Endothelial cell of umbilical vein (primary cell): ENCODE measurements at regions of chr14 and their contacts with region 1.

Region 1: DNA sequence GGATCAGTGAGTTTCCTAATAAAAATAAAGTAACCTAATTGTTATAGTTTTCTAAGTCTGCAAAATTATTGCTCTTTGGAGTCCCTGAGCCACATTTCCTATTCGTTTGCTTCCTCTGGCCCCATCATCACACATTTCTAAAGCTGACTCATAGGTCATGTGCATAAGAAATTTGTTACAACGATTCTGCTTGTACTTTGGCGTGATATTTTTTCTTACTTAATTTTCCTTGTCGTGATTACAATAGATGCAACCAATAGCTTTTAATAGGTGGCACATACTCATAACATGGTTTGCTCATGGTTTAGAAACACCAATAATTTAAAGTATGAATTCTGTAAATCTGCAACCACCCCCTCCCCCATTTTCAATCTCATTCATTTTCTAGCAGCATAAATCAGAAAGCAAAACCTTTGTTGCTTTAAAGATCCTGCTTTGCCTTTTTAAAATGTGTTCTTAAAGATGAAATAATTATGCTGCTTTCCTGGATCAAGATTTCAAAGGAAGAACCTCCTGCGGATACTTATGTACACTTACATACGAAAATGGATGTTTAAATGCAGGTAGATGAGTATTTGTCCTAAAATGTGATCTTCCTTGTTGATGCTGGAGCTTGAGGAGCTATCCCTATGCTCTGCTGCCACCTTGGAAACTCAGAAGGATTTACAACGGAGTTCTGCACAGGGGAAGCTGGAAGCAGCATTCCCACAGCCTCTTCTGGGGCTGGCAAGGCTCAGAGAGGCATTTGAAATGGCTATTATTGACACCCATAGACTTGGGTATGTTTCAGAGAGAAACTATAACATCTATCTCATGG is 1.7 kb upstream of the FLRT2 start:
- DNase-seq: peak; percentile 94
- H3K4me3 ChIP-seq: peak overlapping the region; percentile 38 to 94 (median 93)
- H3K27ac ChIP-seq: peak overlapping the region; percentile 93
- H3K4me1 ChIP-seq: peaks cover 19% of the 10 kb centered on the region
- H3K27me3 ChIP-seq: no peaks in the 10 kb centered on the region
- CTCF ChIP-seq: peak; percentile 52 to 65
- POLR2A ChIP-seq: peak; percentile 39

Region 2: DNA sequence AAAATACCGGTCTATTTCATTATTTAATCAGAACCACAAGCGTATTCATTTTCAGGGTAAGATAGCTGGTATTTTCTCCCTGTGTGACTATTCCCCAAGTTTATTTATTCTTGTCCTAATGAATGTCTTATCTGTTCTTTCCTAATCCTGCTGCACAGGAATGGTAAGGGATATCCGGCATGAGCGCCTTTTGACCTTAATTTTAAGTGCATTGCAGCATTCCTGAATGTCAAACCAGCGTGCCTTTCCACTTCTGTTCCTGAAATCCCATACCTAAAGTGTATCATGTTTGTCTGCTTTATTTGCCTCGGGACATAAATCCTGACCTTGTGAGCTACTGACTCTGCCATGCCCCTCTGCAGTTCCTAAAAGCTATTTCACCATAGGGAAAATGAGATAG is 1711.5 kb before region 1 on chr14:
- CTCF ChIA-PET with region 1: no interaction called
- POLR2A ChIA-PET with region 1: no interaction called
- dilution Hi-C with region 1: no loop called
- intact Hi-C with region 1: loop called (anchors 2 kb)
- DNase-seq: peak; percentile 87
- H3K4me3 ChIP-seq: peak overlapping the region in 1 of 3 experiments; percentile 35
- H3K27ac ChIP-seq: peak overlapping the region; percentile 37
- H3K4me1 ChIP-seq: peaks cover 21% of the 10 kb centered on the region
- H3K27me3 ChIP-seq: no peaks in the 10 kb centered on the region
- CTCF ChIP-seq: no peak
- POLR2A ChIP-seq: peak; percentile 57

Region 3: DNA sequence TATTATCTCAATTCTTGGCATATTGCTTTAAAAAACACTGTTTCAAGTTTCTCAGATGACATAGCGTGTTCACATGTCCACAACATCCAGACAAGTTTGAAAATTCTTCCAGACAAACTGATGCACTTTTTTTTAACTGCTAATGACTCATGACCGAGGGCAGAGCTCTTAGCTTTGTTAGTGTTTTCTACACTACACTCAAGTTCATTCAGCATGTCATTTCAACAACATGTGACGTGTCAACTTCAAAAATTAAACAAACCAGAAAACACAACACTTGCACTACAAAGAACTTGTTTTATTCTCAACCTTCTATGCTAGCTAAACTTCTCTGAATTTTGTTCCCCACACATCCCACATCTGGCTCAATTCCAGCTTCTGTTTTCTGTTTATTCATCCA is 1184.6 kb before region 1 on chr14:
- CTCF ChIA-PET with region 1: no interaction called
- POLR2A ChIA-PET with region 1: no interaction called
- dilution Hi-C with region 1: no loop called
- intact Hi-C with region 1: loop called (anchors 5 kb)
- DNase-seq: peak; percentile 92
- H3K4me3 ChIP-seq: no peak overlapping the region
- H3K27ac ChIP-seq: peak overlapping the region; percentile 58
- H3K4me1 ChIP-seq: peaks cover 21% of the 10 kb centered on the region
- H3K27me3 ChIP-seq: no peaks in the 10 kb centered on the region
- CTCF ChIP-seq: no peak
- POLR2A ChIP-seq: no peak

Region 4: GRCh38 chr14:84749191-84749955 is 778.9 kb before region 1 on chr14:
- CTCF ChIA-PET with region 1: no interaction called
- POLR2A ChIA-PET with region 1: no interaction called
- dilution Hi-C with region 1: no loop called
- intact Hi-C with region 1: loop called (anchors 2 kb)
- DNase-seq: peak; percentile 52
- H3K4me3 ChIP-seq: no peak overlapping the region
- H3K27ac ChIP-seq: peak overlapping the region; percentile 15
- H3K4me1 ChIP-seq: peaks cover 13% of the 10 kb centered on the region
- H3K27me3 ChIP-seq: no peaks in the 10 kb centered on the region
- CTCF ChIP-seq: no peak
- POLR2A ChIP-seq: no peak

Region 5: DNA sequence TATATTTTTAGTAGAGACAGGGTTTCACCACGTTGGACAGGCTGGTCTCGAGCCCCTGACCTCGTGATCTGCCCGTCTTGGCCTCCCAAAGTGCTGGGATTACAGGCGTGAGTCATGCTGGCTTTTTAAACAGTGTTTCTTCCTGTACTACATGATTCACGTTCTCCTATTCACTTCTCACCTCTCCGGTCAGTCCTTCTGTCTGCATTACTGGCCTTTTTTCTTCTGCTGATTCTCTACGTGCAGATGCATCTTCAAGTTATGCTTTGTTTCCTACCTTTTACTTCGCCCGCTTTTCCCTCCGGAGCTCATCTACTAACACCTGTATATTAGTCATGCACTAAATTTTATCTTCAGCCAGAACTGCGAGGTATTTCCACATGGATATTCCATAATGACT is 294.5 kb before region 1 on chr14:
- CTCF ChIA-PET with region 1: interaction called, 3 read pairs
- POLR2A ChIA-PET with region 1: no interaction called
- dilution Hi-C with region 1: no loop called
- intact Hi-C with region 1: loop called (anchors 5 kb)
- DNase-seq: peak; percentile 67
- H3K4me3 ChIP-seq: no peak overlapping the region
- H3K27ac ChIP-seq: no peak overlapping the region
- H3K4me1 ChIP-seq: peaks cover 18% of the 10 kb centered on the region
- H3K27me3 ChIP-seq: no peaks in the 10 kb centered on the region
- CTCF ChIP-seq: no peak
- POLR2A ChIP-seq: no peak

Region 6: GRCh38 chr14:85333313-85333712 is 195.0 kb before region 1 on chr14:
- CTCF ChIA-PET with region 1: no interaction called
- POLR2A ChIA-PET with region 1: no interaction called
- dilution Hi-C with region 1: no loop called
- intact Hi-C with region 1: loop called (anchors 1 kb)
- DNase-seq: peak; percentile 67
- H3K4me3 ChIP-seq: no peak overlapping the region
- H3K27ac ChIP-seq: no peak overlapping the region
- H3K4me1 ChIP-seq: peaks cover 14% of the 10 kb centered on the region
- H3K27me3 ChIP-seq: no peaks in the 10 kb centered on the region
- CTCF ChIP-seq: no peak
- POLR2A ChIP-seq: no peak

Region 7: DNA sequence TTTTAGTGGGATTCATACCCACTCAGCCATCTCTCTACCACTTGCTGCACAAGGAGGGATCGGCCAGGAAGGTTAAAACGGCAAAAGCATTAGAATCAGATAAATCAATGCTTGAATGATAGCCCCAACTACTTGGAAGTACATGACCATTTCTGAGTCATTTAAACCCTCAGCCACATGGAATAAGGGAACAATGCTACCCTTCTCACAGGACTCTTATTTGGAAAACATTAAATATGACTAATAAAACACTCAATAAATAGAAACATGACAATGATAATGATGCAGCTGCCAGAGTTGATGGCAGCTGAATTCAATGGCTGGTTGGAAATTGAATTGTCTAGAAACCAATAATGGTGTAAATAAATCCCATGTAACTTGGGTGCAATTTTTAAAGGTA is 167.0 kb after region 1 on chr14:
- CTCF ChIA-PET with region 1: no interaction called
- POLR2A ChIA-PET with region 1: no interaction called
- dilution Hi-C with region 1: no loop called
- intact Hi-C with region 1: no loop called
- DNase-seq: no peak
- H3K4me3 ChIP-seq: no peak overlapping the region
- H3K27ac ChIP-seq: no peak overlapping the region
- H3K4me1 ChIP-seq: no peaks in the 10 kb centered on the region
- H3K27me3 ChIP-seq: no peaks in the 10 kb centered on the region
- CTCF ChIP-seq: no peak
- POLR2A ChIP-seq: no peak

Region 8: DNA sequence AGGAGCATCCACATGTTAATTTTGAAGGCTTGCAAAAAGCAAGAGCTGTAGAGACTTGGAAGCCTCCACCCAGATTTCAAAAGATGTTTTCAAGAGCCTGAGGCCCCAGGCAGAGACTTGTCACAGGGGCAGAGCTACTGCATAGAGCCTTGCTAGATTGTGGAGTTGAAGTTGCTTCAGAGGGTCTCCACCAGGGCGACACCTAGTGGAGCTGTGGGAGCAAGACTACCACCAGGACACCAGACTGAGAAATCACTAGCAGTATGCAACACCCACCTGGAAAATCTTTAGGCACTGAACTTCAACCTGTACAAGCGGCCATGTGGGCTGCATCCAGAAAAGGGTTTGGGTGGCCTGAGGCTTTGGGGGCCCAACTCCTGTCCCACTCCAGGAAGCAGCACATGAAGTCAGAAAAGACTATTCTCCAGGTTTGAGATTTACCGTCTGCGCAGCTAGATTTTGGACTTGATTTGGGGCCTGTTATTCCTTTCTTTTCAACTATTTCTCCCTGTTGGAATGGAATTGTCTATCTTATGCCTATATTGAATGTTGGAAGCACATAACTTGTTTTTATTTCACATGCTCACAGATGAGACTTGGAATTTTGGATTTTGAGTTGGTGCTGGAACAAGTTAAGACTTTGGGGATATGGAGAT is 510.2 kb after region 1 on chr14:
- CTCF ChIA-PET with region 1: no interaction called
- POLR2A ChIA-PET with region 1: no interaction called
- dilution Hi-C with region 1: no loop called
- intact Hi-C with region 1: loop called (anchors 2 kb)
- DNase-seq: peak; percentile 46
- H3K4me3 ChIP-seq: no peak overlapping the region
- H3K27ac ChIP-seq: no peak overlapping the region
- H3K4me1 ChIP-seq: no peaks in the 10 kb centered on the region
- H3K27me3 ChIP-seq: no peaks in the 10 kb centered on the region
- CTCF ChIP-seq: peak; percentile 73 to 89
- POLR2A ChIP-seq: no peak